Prostate gland (tissue), 2 donors: ENCODE measurements at regions of chr6 and their contacts with region 1.

Region 1: DNA sequence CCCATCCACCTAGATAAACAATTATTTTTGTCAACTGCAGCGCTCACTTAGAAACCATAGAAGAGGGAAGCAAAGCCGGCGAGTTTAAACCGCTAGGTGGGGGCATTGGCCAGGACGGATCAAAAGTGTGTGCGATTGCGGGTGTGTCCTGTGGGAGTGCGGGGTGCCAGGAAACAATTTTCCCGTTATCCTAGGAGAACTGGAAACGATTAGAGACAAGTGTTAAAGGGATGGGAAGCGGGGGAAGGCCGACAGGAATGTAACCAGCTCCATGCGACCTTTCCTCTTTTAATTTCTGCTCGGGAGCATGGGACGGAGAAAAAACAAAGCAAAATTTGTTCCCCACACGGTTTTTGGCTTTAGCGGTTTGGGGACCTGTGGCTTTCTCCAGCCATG is 2.8 kb upstream of the HTR1B start:
- DNase-seq: peak; percentile 53
- H3K4me3 ChIP-seq: peak overlapping the region; percentile 27 to 31
- H3K27ac ChIP-seq: no peak overlapping the region
- H3K4me1 ChIP-seq: peaks cover 2% of the 10 kb centered on the region
- H3K27me3 ChIP-seq: peaks cover 18% of the 10 kb centered on the region
- CTCF ChIP-seq: peak in 2 of 4 experiments; percentile 40 to 41
- POLR2A ChIP-seq: no peak

Region 2: DNA sequence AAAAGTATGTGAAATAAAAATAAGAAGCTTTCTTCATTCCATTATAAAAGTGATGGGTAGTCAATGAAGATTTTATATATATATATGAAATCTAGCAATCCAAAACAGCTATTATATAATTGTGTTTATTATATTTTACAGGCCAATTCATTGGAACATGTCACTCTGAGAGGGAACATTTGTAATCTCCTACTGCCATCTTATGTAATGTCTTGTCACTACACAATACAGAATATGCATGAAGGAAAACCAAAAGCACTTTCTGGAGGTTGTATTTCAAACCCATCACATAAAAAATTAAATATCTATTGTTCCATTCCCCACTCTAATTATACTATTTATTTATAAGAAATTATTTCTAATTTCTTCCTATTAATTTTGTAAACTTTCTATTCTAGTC is 1369.8 kb after region 1 on chr6:
- intact Hi-C with region 1: loop called (anchors 10 kb)
- DNase-seq: no peak
- H3K4me3 ChIP-seq: no peak overlapping the region
- H3K27ac ChIP-seq: no peak overlapping the region
- H3K4me1 ChIP-seq: no peaks in the 10 kb centered on the region
- H3K27me3 ChIP-seq: no peaks in the 10 kb centered on the region
- CTCF ChIP-seq: peak in 3 of 4 experiments; percentile 17 to 39 (median 21)
- POLR2A ChIP-seq: no peak